Right ventricle myocardium inferior (tissue), 1 donor: ENCODE measurements at regions of chr6 and their contacts with region 1.

Region 1: GRCh38 chr6:30616811-30617564 is at the start of gene PPP1R10:
- DNase-seq: peak; percentile 99
- ATAC-seq: peak; percentile 88
- total RNA-seq, gene PPP1R10: 33.5 TPM

Region 2: GRCh38 chr6:30489081-30490025 is 127.6 kb before region 1 on chr6 and contains the start of gene HLA-E:
- intact Hi-C with region 1: loop called (anchors 5 kb)
- DNase-seq: peak; percentile 91
- ATAC-seq: peak; percentile 96
- total RNA-seq, gene HLA-E: 152 TPM

Region 3: GRCh38 chr6:30530014-30530413 is 87.0 kb before region 1 on chr6:
- intact Hi-C with region 1: no loop called
- DNase-seq: no peak
- ATAC-seq: no peak

Region 4: GRCh38 chr6:30556066-30556905 is 60.7 kb before region 1 on chr6 and contains the start of gene GNL1:
- intact Hi-C with region 1: loop called (anchors 2 kb)
- DNase-seq: peak; percentile 96
- ATAC-seq: peak; percentile 79
- total RNA-seq, gene GNL1: 18.3 TPM

Region 5: DNA sequence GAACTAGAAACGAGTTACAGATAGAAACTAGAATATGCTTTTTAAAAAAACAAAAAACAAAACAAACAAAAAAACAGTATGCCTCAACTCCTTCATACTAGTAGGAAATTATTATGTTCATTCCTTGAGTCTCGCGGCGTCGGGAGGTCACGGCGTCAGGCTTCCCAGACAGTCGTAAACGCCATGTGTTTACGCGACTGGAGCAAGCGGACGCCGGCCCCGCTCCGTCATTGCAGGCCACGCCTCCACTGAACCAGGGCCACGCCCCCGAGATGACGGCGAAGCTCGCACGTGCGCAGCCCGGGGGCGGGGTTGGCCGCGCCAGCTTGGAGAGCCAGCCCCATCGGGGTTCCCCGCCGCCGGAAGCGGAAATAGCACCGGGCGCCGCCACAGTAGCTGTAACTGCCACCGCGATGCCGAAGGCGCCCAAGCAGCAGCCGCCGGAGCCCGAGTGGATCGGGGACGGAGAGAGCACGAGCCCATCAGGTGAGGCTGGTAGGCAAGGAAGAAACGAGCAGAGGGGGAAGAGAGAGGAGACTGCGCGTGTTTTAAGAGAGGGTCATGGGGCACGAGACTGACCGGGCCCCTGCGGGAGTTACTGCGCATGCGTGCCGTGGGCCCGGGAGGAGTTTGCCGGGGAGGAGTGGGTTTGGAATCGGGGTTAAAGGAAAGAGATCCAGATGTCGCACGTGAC is 45.8 kb before region 1 on chr6 and contains the start of gene ABCF1:
- intact Hi-C with region 1: loop called (anchors 5 kb)
- DNase-seq: peak; percentile 100
- ATAC-seq: peak; percentile 99
- total RNA-seq, gene ABCF1: 39.5 TPM

Region 6: GRCh38 chr6:30672445-30673253 is 55.7 kb after region 1 on chr6 and contains the start of gene DHX16:
- intact Hi-C with region 1: loop called (anchors 5 kb)
- DNase-seq: peak; percentile 95
- ATAC-seq: peak; percentile 92
- total RNA-seq, gene DHX16: 20.6 TPM